ENCODE measurements at regions of chr11 and their contacts with region 1.

Region 1: GRCh38 chr11:12043959-12044819 is 35.8 kb upstream of the DKK3 start:
- DNase-seq: peak; percentile 80 to 91
- ATAC-seq: peak; percentile 88 to 91
- H3K4me3 ChIP-seq: no peak overlapping the region
- H3K27ac ChIP-seq: peak overlapping the region; percentile 85 to 86
- H3K4me1 ChIP-seq: peaks cover 44% of the 10 kb centered on the region
- CTCF ChIP-seq: peak; percentile 97
- EP300 ChIP-seq: peak; percentile 18 to 53; a peak in 2 of 5 replicates
- POLR2A ChIP-seq: no peak
- RAD21 ChIP-seq: peak; percentile 99

Region 2: GRCh38 chr11:11806586-11806985 is 237.6 kb before region 1 on chr11:
- CTCF ChIA-PET with region 1: interaction called, 51 read pairs
- POLR2A ChIA-PET with region 1: no interaction called
- DNase-seq: no peak
- ATAC-seq: no peak
- H3K4me3 ChIP-seq: no peak overlapping the region
- H3K27ac ChIP-seq: no peak overlapping the region
- H3K4me1 ChIP-seq: no peaks in the 10 kb centered on the region
- CTCF ChIP-seq: no peak
- EP300 ChIP-seq: no peak
- POLR2A ChIP-seq: no peak
- RAD21 ChIP-seq: no peak

Region 3: GRCh38 chr11:11937957-11938356 is 106.2 kb before region 1 on chr11:
- CTCF ChIA-PET with region 1: interaction called, 54 read pairs
- POLR2A ChIA-PET with region 1: no interaction called
- DNase-seq: peak in 1 of 2 experiments; percentile 26
- ATAC-seq: no peak; a peak in 1 of 6 replicates
- H3K4me3 ChIP-seq: no peak overlapping the region
- H3K27ac ChIP-seq: peak overlapping the region; percentile 12 to 13; a peak in 2 of 6 replicates
- H3K4me1 ChIP-seq: peaks cover 22% of the 10 kb centered on the region
- CTCF ChIP-seq: no peak
- EP300 ChIP-seq: no peak
- POLR2A ChIP-seq: no peak
- RAD21 ChIP-seq: no peak

Region 4: GRCh38 chr11:11966826-11967668 is 77.1 kb before region 1 on chr11:
- CTCF ChIA-PET with region 1: interaction called, 12 read pairs
- POLR2A ChIA-PET with region 1: no interaction called
- DNase-seq: peak; percentile 64 to 90
- ATAC-seq: peak; percentile 88 to 96
- H3K4me3 ChIP-seq: no peak overlapping the region
- H3K27ac ChIP-seq: no peak overlapping the region
- H3K4me1 ChIP-seq: no peaks in the 10 kb centered on the region
- CTCF ChIP-seq: peak; percentile 56
- EP300 ChIP-seq: no peak
- POLR2A ChIP-seq: no peak
- RAD21 ChIP-seq: peak; percentile 48 to 64; a peak in 4 of 5 replicates

Region 5: GRCh38 chr11:12079726-12080556 is 35.8 kb after region 1 on chr11:
- CTCF ChIA-PET with region 1: interaction called, 25 read pairs
- POLR2A ChIA-PET with region 1: no interaction called
- DNase-seq: peak; percentile 82 to 96
- ATAC-seq: peak; percentile 64 to 69
- H3K4me3 ChIP-seq: no peak overlapping the region
- H3K27ac ChIP-seq: peak overlapping the region; percentile 97
- H3K4me1 ChIP-seq: peaks cover 58% of the 10 kb centered on the region
- CTCF ChIP-seq: no peak
- EP300 ChIP-seq: peak; percentile 94; a peak in 4 of 5 replicates
- POLR2A ChIP-seq: no peak
- RAD21 ChIP-seq: peak; percentile 32 to 62

Region 6: DNA sequence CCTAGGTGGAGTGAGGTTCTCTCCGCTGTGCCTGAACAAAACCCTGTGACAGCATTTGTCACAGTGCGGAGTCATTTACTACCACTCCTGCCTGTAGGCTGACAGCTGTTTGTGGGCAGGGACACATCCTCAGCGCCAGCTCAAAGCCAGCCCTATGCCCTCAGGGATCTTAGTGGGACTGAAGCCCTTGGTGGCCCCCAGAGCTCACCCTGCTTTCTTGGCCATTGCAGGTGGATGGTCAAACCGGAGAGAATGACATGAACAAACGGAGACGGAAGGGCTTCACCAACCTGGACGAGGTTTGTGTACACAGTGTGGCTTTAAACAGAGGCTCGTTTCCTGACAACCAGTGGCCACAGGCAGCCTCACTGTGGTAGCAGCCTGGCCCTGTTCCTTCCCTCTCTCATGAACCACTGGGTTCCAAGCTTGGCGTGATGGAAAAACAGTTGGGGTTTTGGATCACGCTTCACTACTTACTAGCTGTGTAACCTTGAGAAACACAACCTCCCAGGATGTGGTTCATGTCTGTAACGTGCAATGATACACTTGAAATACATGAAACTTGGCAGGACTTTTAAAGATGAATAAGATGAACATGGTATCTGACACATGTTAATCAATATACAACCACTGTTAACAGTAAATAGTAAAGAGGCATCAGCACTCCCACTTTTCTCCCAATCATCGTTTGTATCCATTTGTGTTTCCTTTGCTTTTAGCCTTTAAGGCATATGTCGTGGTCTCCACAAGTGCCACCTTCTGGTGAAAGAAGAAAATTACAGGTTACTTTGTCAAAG is 192.0 kb after region 1 on chr11:
- CTCF ChIA-PET with region 1: interaction called, 115 read pairs
- POLR2A ChIA-PET with region 1: interaction called, 4 read pairs
- DNase-seq: peak; percentile 58 to 62
- ATAC-seq: peak; percentile 51 to 70; a peak in 4 of 6 replicates
- H3K4me3 ChIP-seq: no peak overlapping the region
- H3K27ac ChIP-seq: peak overlapping the region; percentile 81 to 87
- H3K4me1 ChIP-seq: peaks cover 58% of the 10 kb centered on the region
- CTCF ChIP-seq: peak; percentile 83
- EP300 ChIP-seq: no peak
- POLR2A ChIP-seq: no peak
- RAD21 ChIP-seq: peak; percentile 73 to 76

Region 7: DNA sequence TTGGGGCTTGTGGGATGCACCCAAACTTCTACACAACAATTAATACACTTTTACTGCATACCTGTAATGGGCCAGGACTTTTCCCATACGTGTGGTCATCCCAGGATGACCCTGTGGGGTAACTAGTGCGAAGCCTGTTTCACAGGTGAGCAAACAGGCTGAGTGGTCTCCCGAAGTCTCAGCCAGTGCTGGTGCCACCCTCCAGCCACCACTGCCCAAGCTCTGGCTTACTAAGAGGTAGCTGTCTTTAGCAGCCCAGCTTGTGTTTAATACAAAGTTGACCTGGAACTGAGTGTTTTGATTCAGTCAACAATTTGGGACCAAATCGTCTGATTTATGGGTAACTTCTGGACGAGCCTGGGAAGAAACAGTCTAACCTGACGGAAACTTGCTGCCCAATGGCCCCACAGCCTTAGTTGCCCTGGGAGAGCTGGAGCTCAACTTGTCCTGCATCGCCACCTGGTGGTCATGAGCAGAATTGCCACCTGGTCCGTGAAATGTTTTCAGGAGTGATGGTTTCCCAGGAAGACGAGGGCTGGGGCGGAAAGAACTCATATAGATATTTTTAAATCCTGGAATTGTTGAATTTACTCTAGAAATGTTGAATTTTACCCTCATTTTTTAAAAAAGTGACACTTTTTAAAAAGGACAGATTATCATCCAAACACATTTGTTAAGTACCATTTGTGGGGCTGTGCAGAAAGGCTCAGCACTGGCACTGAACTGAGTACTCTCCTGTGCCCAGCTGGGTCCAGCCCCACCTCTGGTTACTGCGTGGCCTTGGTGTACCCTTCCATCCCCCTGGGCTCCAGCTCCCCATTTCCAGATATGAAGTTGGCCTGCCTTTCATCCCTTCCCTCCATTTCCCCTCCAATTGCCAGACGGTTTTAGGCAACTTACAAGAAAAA is 237.6 kb after region 1 on chr11:
- CTCF ChIA-PET with region 1: interaction called, 664 read pairs
- POLR2A ChIA-PET with region 1: interaction called, 7 read pairs
- DNase-seq: peak; percentile 77 to 89
- ATAC-seq: peak; percentile 57 to 83; a peak in 5 of 6 replicates
- H3K4me3 ChIP-seq: no peak overlapping the region
- H3K27ac ChIP-seq: peak overlapping the region; percentile 58 to 80
- H3K4me1 ChIP-seq: peaks cover 38% of the 10 kb centered on the region
- CTCF ChIP-seq: peak; percentile 96
- EP300 ChIP-seq: no peak
- POLR2A ChIP-seq: no peak
- RAD21 ChIP-seq: peak; percentile 99 to 100

Measured in A549 (cell line).